ENCODE measurements at regions of chr3 and their contacts with region 1.

Region 1: GRCh38 chr3:169676925-169677537 is 13.5 kb upstream of the MECOM start:
- DNase-seq: no peak
- H3K4me3 ChIP-seq: no peak overlapping the region
- H3K27ac ChIP-seq: no peak overlapping the region
- H3K4me1 ChIP-seq: no peaks in the 10 kb centered on the region
- H3K27me3 ChIP-seq: peaks cover 0 to 51% (median 0%) of the 10 kb centered on the region in 7 donors
- CTCF ChIP-seq: no peak
- POLR2A ChIP-seq: no peak

Region 2: DNA sequence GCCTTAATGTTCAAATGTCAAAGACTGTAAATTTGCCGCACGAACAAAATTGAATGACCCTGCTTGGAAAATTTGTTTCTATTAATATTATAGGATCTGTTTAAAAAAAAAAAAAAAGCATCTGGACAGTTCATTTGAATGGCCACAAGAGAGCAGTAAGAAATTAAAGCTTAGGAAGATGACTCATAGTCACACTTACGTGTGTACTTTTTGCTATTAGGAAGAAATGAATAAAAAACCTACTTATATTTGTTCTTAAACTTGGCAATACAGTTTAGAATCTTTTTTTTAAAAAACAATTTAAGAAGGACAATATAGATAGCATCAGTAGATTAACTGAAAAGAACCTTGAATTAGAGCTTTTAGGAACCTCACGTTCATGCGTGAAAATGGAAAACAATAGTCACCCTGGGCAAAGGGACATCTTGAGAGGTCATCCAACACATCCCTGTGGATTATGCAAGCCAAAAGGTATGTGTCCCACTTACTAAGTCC is 635.3 kb before region 1 on chr3:
- intact Hi-C with region 1: loop called (anchors 10 kb)
- DNase-seq: no peak
- H3K4me3 ChIP-seq: no peak overlapping the region
- H3K27ac ChIP-seq: no peak overlapping the region
- H3K4me1 ChIP-seq: no peaks in the 10 kb centered on the region
- H3K27me3 ChIP-seq: no peaks in the 10 kb centered on the region
- CTCF ChIP-seq: peak in 6 of 11 experiments; percentile 19 to 49 (median 31)
- POLR2A ChIP-seq: no peak

Region 3: DNA sequence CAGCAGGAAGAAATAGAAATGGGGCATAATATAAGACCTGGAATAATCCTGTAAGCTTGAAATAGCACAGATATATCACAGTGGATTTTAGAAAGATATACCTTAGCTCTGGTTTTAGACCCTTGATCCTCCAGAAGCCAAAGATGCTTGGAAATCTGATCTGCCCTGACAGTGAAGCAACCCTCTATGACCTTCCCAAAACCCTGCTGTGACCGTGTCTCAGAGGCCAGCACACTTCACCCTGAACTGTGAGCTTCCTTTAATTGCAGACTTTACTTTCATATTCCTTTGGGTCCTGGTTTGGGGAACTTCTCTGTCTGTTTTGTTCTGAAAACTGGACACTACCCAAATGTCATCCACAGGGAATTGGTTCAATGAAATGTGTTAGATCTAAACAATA is 26.5 kb before region 1 on chr3:
- intact Hi-C with region 1: no loop called
- DNase-seq: no peak
- H3K4me3 ChIP-seq: no peak overlapping the region
- H3K27ac ChIP-seq: no peak overlapping the region
- H3K4me1 ChIP-seq: no peaks in the 10 kb centered on the region
- H3K27me3 ChIP-seq: peaks cover 0 to 36% (median 0%) of the 10 kb centered on the region in 7 donors
- CTCF ChIP-seq: no peak
- POLR2A ChIP-seq: no peak